ENCODE measurements at regions of chr1 and their contacts with region 1.

Region 1: DNA sequence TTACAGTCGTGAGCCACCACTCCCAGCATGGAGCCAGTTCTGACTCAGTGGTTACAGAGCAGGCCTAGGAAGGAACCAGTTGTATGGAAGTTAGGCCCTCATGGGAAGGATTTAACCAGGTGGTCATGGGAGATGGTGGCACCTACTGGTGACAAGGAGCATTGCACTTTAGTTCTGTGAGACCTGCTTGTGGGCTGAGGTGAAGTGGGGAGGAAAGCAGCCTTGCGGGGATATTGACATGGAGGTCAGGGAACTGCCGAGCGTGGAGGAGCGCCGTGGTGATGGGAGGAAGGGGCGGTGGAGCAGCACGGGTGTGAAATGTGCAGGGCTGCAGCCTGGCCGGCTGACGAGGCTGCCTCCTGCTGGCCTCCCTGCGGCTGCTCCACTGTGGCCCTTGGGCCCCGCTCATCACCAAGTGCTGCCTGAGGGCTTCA is 100.4 kb downstream of the GALNT2 start:
- DNase-seq: peak; percentile 75
- ATAC-seq: peak; percentile 55
- H3K4me3 ChIP-seq: no peak overlapping the region
- H3K4me3 Mint-ChIP-seq: peak overlapping the region; percentile 11
- H3K27ac ChIP-seq: no peak overlapping the region
- H3K27ac Mint-ChIP-seq: peak overlapping the region; percentile 0
- H3K4me1 ChIP-seq: peaks cover 19 to 23% of the 10 kb centered on the region in 2 donors
- H3K4me1 Mint-ChIP-seq: peaks cover 51% of the 10 kb centered on the region
- H3K27me3 ChIP-seq: no peaks in the 10 kb centered on the region
- H3K27me3 Mint-ChIP-seq: no peaks in the 10 kb centered on the region
- CTCF ChIP-seq: peak; percentile 89

Region 2: GRCh38 chr1:229714964-229715603 is 452.4 kb before region 1 on chr1:
- CTCF ChIA-PET with region 1: interaction called, 18 read pairs
- POLR2A ChIA-PET with region 1: no interaction called
- intact Hi-C with region 1: loop called (anchors 2 kb)
- DNase-seq: peak; percentile 61
- ATAC-seq: no peak
- H3K4me3 ChIP-seq: no peak overlapping the region
- H3K4me3 Mint-ChIP-seq: no peak overlapping the region
- H3K27ac ChIP-seq: no peak overlapping the region
- H3K27ac Mint-ChIP-seq: peak overlapping the region; percentile 41
- H3K4me1 ChIP-seq: no peaks in the 10 kb centered on the region
- H3K4me1 Mint-ChIP-seq: no peaks in the 10 kb centered on the region
- H3K27me3 ChIP-seq: peaks cover 0 to 3% (median 0%) of the 10 kb centered on the region in 4 experiments
- H3K27me3 Mint-ChIP-seq: peaks cover 4% of the 10 kb centered on the region
- CTCF ChIP-seq: peak; percentile 66

Region 3: GRCh38 chr1:230109895-230110667 is 57.4 kb before region 1 on chr1:
- CTCF ChIA-PET with region 1: interaction called, 17 read pairs
- POLR2A ChIA-PET with region 1: no interaction called
- intact Hi-C with region 1: no loop called
- DNase-seq: peak; percentile 67
- ATAC-seq: peak; percentile 89
- H3K4me3 ChIP-seq: no peak overlapping the region
- H3K4me3 Mint-ChIP-seq: peak overlapping the region; percentile 74
- H3K27ac ChIP-seq: peak overlapping the region in 1 of 2 donors; percentile 23
- H3K27ac Mint-ChIP-seq: peak overlapping the region; percentile 90
- H3K4me1 ChIP-seq: peaks cover 37 to 53% of the 10 kb centered on the region in 2 donors
- H3K4me1 Mint-ChIP-seq: peaks cover 86% of the 10 kb centered on the region
- H3K27me3 ChIP-seq: no peaks in the 10 kb centered on the region
- H3K27me3 Mint-ChIP-seq: no peaks in the 10 kb centered on the region
- CTCF ChIP-seq: no peak

Region 4: DNA sequence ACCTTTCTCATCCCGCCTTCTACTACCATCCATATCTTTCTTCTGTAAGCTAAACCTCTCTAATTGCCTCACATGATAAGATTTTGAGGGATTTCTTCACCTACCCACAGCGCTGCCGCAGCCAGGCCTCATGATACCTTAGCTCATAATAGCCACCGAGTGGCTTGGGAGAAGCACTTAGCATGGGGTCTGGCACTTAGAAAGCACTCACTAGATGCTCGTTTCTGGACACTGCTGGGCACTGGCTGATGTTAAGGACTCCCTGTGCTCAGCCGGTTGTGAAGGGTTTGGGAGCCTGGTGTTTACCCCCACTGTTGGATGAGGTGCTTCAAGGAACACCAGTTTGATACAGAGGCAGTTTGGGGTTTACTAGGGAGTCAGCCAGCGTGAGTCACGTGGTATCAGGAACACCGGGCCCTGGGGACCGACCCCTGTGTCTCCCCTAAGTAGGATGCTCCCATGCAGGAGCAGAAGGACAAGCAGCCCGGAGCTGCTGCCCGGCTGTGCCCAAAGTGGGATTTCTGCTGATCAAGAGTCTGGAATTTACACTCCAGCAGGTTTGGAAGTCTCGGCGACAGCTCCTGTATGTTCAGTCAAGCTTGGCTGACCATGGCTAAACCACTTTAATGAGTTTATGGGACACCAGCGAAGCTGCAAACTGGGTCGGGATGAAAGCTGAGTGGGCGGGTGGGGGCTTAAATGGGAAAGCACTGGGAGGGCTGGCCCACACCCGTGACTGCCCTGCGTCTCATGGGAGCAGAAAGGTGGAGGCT is 37.1 kb before region 1 on chr1:
- CTCF ChIA-PET with region 1: no interaction called
- POLR2A ChIA-PET with region 1: no interaction called
- intact Hi-C with region 1: no loop called
- DNase-seq: no peak
- ATAC-seq: no peak
- H3K4me3 ChIP-seq: no peak overlapping the region
- H3K4me3 Mint-ChIP-seq: no peak overlapping the region
- H3K27ac ChIP-seq: no peak overlapping the region
- H3K27ac Mint-ChIP-seq: no peak overlapping the region
- H3K4me1 ChIP-seq: peaks cover 17 to 26% of the 10 kb centered on the region in 2 donors
- H3K4me1 Mint-ChIP-seq: peaks cover 66% of the 10 kb centered on the region
- H3K27me3 ChIP-seq: no peaks in the 10 kb centered on the region
- H3K27me3 Mint-ChIP-seq: no peaks in the 10 kb centered on the region
- CTCF ChIP-seq: no peak

Region 5: DNA sequence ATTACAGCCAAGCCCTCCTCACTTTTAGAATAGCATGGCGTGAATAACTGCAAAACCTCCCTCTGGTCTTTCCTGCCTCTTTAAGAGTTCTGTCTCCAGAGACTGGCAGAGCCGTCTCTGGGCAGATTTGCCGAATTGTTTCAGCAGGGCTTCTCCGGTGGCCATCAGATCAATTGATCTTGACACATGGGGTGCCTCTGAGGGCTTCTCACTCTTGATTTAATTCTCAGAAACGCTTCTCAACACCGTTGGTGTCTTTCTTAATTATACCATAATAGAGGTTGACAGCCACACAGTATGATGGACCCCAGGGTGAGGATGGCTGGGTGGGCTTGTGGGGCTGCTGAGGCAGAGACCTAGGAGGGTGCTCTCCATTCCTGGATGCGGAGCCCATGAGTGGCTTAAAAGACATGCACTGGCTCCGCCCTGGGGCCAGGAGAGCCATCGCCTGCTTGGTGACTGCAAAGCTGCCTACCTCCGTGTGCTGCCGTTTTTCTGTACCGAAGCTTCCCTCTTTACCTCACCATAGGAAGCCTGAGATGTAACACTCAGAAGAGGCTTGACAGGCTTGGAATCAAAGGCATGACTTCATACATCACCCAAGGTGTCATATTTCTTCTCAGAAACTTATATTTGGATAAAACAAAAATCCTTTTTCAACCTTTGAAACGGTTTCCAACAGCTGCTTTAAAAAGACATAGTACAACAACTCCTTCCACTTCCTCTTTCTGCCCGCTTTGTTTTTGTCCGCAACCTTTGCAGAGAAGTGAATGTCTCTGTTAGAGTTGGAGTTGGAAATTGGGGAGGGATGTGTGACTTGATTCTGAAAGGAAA is 17.5 kb before region 1 on chr1:
- CTCF ChIA-PET with region 1: interaction called, 6 read pairs
- POLR2A ChIA-PET with region 1: no interaction called
- intact Hi-C with region 1: loop called (anchors 2 kb)
- DNase-seq: peak; percentile 78
- ATAC-seq: peak; percentile 77
- H3K4me3 ChIP-seq: peak overlapping the region; percentile 8 to 64 (median 51)
- H3K4me3 Mint-ChIP-seq: peak overlapping the region; percentile 73
- H3K27ac ChIP-seq: peak overlapping the region; percentile 76 to 94
- H3K27ac Mint-ChIP-seq: peak overlapping the region; percentile 98
- H3K4me1 ChIP-seq: peaks cover 61 to 63% of the 10 kb centered on the region in 2 donors
- H3K4me1 Mint-ChIP-seq: peaks cover 71% of the 10 kb centered on the region
- H3K27me3 ChIP-seq: no peaks in the 10 kb centered on the region
- H3K27me3 Mint-ChIP-seq: no peaks in the 10 kb centered on the region
- CTCF ChIP-seq: no peak

Region 6: GRCh38 chr1:230288641-230289349 is 121.4 kb after region 1 on chr1:
- CTCF ChIA-PET with region 1: no interaction called
- POLR2A ChIA-PET with region 1: no interaction called
- intact Hi-C with region 1: no loop called
- DNase-seq: no peak
- ATAC-seq: no peak
- H3K4me3 ChIP-seq: no peak overlapping the region
- H3K4me3 Mint-ChIP-seq: no peak overlapping the region
- H3K27ac ChIP-seq: no peak overlapping the region
- H3K27ac Mint-ChIP-seq: peak overlapping the region; percentile 53
- H3K4me1 ChIP-seq: peaks cover 45 to 49% of the 10 kb centered on the region in 2 donors
- H3K4me1 Mint-ChIP-seq: peaks cover 60% of the 10 kb centered on the region
- H3K27me3 ChIP-seq: no peaks in the 10 kb centered on the region
- H3K27me3 Mint-ChIP-seq: no peaks in the 10 kb centered on the region
- CTCF ChIP-seq: no peak

Region 7: GRCh38 chr1:230310381-230311163 is 143.1 kb after region 1 on chr1:
- CTCF ChIA-PET with region 1: interaction called, 5 read pairs
- POLR2A ChIA-PET with region 1: no interaction called
- intact Hi-C with region 1: loop called (anchors 5 kb)
- DNase-seq: peak; percentile 82
- ATAC-seq: peak; percentile 87
- H3K4me3 ChIP-seq: no peak overlapping the region
- H3K4me3 Mint-ChIP-seq: no peak overlapping the region
- H3K27ac ChIP-seq: no peak overlapping the region
- H3K27ac Mint-ChIP-seq: peak overlapping the region; percentile 8
- H3K4me1 ChIP-seq: peaks cover 3 to 6% of the 10 kb centered on the region in 2 donors
- H3K4me1 Mint-ChIP-seq: peaks cover 19% of the 10 kb centered on the region
- H3K27me3 ChIP-seq: no peaks in the 10 kb centered on the region
- H3K27me3 Mint-ChIP-seq: peaks cover 8% of the 10 kb centered on the region
- CTCF ChIP-seq: peak; percentile 97

Measured in B cell (primary cell).